AG04449 (cell line): ENCODE measurements at regions of chr11 and their contacts with region 1.

Region 1: DNA sequence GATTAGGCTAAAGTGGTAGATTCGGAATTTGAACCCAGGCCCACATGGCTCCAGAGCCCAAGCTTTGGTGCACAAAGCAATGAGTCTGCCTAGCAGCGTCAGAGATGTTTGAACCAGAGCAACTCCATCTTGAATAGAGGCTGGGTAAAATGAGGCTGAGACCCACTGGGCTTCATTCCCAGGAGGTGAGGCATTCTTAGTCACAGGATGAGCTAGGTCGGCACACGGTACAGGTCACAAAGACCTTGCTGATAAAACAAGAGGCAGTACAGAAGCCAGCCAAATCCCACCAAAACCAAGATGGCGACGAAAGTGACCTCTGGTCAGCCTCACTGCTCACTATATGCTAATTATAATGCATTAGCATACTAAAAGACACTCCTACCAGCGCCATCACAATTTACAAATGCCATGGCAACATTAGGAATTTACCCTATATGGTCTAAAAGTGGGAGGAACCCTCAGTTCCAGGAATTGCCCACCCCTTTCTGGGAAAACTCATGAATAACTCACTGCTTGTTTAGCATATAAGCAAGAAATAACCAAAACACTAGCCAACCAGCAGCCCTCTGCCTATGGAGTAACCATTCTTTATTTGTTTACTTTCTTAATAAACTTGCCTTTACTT is 40.3 kb upstream of the DAGLA start:
- DNase-seq: no peak
- H3K4me3 ChIP-seq: no peak overlapping the region
- CTCF ChIP-seq: no peak

Region 2: DNA sequence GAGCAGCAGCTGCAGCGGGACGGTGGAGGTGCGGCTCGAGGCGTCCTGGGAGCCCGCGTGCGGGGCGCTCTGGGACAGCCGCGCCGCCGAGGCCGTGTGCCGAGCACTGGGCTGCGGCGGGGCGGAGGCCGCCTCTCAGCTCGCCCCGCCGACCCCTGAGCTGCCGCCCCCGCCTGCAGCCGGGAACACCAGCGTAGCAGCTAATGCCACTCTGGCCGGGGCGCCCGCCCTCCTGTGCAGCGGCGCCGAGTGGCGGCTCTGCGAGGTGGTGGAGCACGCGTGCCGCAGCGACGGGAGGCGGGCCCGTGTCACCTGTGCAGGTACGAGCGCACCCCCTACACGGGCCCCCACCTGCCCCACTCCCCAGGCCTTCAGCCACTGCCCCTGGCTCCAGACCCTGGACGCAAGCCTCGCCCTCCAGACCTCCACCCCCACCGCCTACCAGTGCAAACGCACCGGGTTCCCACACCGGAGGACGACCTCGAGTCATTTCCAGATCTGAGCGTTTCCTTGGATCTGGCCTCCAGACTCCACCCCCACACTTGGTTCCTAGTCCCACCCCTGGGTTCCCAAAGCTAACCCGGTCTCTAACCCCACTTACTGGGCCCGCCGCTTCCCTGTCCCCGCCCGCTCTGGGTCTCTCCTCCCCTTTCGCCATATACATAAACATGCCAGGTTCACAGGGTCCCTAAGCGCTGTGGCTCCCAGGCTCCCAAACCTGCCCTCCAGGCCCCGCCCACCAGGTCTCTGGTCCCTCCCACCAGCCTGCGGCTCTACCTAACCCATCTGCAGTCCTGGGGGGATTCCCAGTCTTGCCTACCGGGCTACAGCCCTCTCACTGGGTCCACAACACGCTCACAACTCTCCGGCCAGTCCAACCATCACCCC is 632.1 kb before region 1 on chr11:
- CTCF ChIA-PET with region 1: no interaction called
- POLR2A ChIA-PET with region 1: no interaction called
- DNase-seq: no peak
- H3K4me3 ChIP-seq: no peak overlapping the region
- CTCF ChIP-seq: no peak

Region 3: GRCh38 chr11:61446211-61446651 is 193.7 kb before region 1 on chr11:
- CTCF ChIA-PET with region 1: interaction called, 283 read pairs
- POLR2A ChIA-PET with region 1: interaction called, 3 read pairs
- DNase-seq: peak; percentile 83
- H3K4me3 ChIP-seq: no peak overlapping the region
- CTCF ChIP-seq: peak; percentile 95

Region 4: GRCh38 chr11:61617515-61617914 is 22.4 kb before region 1 on chr11:
- CTCF ChIA-PET with region 1: interaction called, 18 read pairs
- POLR2A ChIA-PET with region 1: no interaction called
- DNase-seq: no peak
- H3K4me3 ChIP-seq: no peak overlapping the region
- CTCF ChIP-seq: no peak

Region 5: GRCh38 chr11:61654397-61654829 is 14.5 kb after region 1 on chr11:
- CTCF ChIA-PET with region 1: interaction called, 99 read pairs
- POLR2A ChIA-PET with region 1: no interaction called
- DNase-seq: no peak
- H3K4me3 ChIP-seq: no peak overlapping the region
- CTCF ChIP-seq: no peak

Region 6: GRCh38 chr11:61666684-61667297 is 26.9 kb after region 1 on chr11:
- CTCF ChIA-PET with region 1: interaction called, 12 read pairs
- POLR2A ChIA-PET with region 1: no interaction called
- DNase-seq: no peak
- H3K4me3 ChIP-seq: no peak overlapping the region
- CTCF ChIP-seq: no peak

Region 7: DNA sequence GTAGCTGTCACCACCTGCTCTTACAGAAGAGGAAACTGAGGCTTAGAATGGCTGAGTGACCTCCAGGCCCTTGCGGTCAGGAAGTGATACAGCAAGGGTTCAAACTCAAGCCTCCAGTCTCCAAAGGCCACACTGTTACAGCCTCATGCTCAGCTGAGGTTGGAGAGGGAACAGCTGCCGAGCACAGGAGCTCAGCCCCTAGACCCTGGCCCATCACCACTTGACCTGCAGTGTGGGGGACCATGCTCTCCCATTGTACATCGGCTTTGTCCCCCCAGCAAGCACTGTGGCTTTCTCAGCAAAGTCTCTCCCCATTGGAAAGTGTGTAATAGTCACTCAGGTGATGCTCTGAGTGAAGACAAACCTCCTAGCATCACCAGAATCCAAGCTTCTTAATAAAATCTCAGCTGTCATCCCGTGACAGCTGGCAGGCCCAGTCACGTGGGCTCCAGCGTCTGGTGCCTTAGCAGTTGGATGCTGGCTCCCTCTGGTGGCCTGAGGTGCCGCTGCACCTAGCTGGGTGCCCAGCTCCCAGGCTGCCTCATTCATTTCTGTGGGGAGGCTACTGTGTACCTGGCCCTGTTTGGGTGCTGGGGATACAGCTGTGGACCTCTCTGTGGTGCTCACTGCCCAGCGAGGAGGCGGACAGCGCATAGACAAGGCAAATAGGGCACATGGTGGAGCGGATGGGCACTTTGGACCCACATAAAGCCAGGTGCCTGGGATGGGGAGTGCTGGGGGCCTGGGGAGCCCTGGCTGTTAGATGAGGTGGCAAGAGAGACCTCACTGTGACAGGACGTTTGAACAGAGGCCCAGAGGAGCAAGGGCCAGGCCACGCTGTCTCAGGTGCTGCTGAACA is 93.4 kb after region 1 on chr11:
- CTCF ChIA-PET with region 1: interaction called, 30 read pairs
- POLR2A ChIA-PET with region 1: no interaction called
- DNase-seq: no peak
- H3K4me3 ChIP-seq: no peak overlapping the region
- CTCF ChIP-seq: peak; percentile 99